PC-9 (cell line): ENCODE measurements at regions of chr12 and their contacts with region 1.

Region 1: GRCh38 chr12:27305673-27306456 is 26.8 kb upstream of the BMAL2 start:
- DNase-seq: peak in 1 of 2 experiments; percentile 59
- H3K4me3 ChIP-seq: no peak overlapping the region
- H3K27ac ChIP-seq: no peak overlapping the region
- H3K4me1 ChIP-seq: no peaks in the 10 kb centered on the region
- H3K27me3 ChIP-seq: no peaks in the 10 kb centered on the region
- CTCF ChIP-seq: peak; percentile 84

Region 2: DNA sequence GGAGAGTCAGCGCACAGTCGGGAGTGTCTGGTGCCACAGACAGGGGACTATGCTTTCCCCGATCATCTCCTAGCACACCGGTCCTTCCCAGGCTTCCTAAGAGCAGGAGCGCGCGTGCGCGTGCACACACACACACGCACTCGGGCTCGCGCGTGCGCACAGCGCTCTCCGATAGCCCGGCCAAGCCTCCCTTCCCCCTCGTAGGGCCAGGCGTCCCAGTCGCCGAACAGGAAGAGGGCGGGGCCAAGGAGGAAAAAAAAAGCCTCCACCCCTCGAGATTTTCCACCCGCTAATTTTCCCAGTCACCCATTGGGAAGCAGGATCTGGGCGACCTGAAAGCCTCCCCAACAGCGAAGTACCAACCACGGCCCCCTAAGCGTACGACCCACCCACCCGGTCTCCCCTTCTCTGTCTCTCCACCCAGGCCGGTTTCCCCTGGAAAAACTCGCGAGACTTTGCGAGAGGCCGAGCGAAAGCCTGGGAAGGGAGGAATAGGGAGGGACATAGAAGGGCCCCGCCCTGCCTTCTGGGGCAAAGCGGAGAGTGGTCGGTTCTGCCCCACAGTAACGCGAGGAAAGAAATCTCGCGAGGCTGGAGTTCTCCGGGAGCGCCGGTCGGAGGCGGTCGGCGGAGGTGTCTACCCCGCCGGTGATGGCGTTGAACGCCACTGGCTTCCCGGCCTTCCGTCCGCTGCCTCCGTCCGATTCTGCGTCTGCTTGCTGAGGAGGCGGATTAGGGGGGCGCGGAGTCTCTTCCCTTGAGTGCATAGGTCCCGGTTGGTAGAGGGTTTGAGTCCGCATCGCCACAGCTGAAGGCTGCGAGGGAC is 367.8 kb before region 1 on chr12 and contains the starts of genes FGFR1OP2 and INTS13:
- CTCF ChIA-PET with region 1: no interaction called
- POLR2A ChIA-PET with region 1: interaction called, 7 read pairs
- intact Hi-C with region 1: loop called (anchors 10 kb)
- DNase-seq: peak; percentile 94 to 100
- H3K4me3 ChIP-seq: peak within 1 kb of the TSS; percentile 90
- H3K27ac ChIP-seq: peak within 1 kb of the TSS; percentile 92
- H3K4me1 ChIP-seq: peaks cover 40% of the 10 kb centered on the region
- H3K27me3 ChIP-seq: no peaks in the 10 kb centered on the region
- CTCF ChIP-seq: no peak
- total RNA-seq, gene FGFR1OP2: 38.8 and 45.7 TPM in 2 replicates
- total RNA-seq, gene INTS13: 34.4 and 40.8 TPM in 2 replicates

Region 3: GRCh38 chr12:27142101-27142721 is 163.7 kb before region 1 on chr12:
- CTCF ChIA-PET with region 1: no interaction called
- POLR2A ChIA-PET with region 1: no interaction called
- intact Hi-C with region 1: loop called (anchors 5 kb)
- DNase-seq: peak; percentile 44 to 64
- H3K4me3 ChIP-seq: no peak overlapping the region
- H3K27ac ChIP-seq: no peak overlapping the region
- H3K4me1 ChIP-seq: no peaks in the 10 kb centered on the region
- H3K27me3 ChIP-seq: no peaks in the 10 kb centered on the region
- CTCF ChIP-seq: peak; percentile 89

Region 4: GRCh38 chr12:27243804-27244683 is 61.8 kb before region 1 on chr12 and contains the start of gene STK38L:
- CTCF ChIA-PET with region 1: interaction called, 6 read pairs
- POLR2A ChIA-PET with region 1: no interaction called
- intact Hi-C with region 1: loop called (anchors 5 kb)
- DNase-seq: peak; percentile 93 to 100
- H3K4me3 ChIP-seq: peak within 1 kb of the TSS; percentile 64
- H3K27ac ChIP-seq: peak within 1 kb of the TSS; percentile 75
- H3K4me1 ChIP-seq: peaks cover 19% of the 10 kb centered on the region
- H3K27me3 ChIP-seq: no peaks in the 10 kb centered on the region
- CTCF ChIP-seq: peak; percentile 56
- total RNA-seq, gene STK38L: 34.7 and 40.0 TPM in 2 replicates

Region 5: DNA sequence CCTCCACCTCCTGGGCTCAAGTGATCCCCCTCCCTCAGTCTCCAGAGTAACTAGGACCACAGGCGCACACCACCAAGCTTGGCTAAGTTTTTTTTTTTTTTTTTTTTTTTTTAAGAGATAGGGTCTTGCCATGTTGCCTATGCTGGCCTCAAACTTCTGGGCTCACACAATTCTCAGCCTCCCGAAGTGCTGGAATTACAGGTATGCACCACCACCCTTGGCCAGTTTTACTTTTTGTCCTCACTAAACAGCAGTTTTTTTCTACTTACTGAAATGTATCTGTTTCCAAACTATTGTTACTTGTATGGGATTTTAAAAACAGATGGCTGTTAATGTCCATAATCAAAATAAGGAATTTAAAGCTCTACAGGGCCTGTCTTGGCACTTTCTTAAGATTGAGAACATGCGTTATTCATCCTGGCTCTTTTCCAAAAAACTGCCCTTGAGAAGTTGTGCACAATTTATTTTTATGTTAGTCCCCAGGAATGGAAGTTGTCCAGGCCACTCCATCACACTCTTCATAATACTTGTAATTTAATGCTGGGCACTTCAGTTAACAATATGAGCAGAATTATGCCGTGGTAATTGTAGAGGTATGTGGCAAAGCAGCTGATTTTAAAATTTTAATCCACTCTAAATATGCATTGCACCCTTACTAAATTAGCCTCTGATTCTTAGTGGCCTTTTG is 338.4 kb after region 1 on chr12:
- CTCF ChIA-PET with region 1: no interaction called
- POLR2A ChIA-PET with region 1: no interaction called
- intact Hi-C with region 1: no loop called
- DNase-seq: no peak
- H3K4me3 ChIP-seq: no peak overlapping the region
- H3K27ac ChIP-seq: no peak overlapping the region
- H3K4me1 ChIP-seq: peaks cover 5% of the 10 kb centered on the region; the same call in 1 of the 2 replicates
- H3K27me3 ChIP-seq: no peaks in the 10 kb centered on the region
- CTCF ChIP-seq: no peak